Activated CD4-positive, alpha-beta T cell treated with anti-CD3 and anti-CD28 coated beads for 36 hours (primary cell): ENCODE measurements at regions of chr11 and their contacts with region 1.

Region 1: DNA sequence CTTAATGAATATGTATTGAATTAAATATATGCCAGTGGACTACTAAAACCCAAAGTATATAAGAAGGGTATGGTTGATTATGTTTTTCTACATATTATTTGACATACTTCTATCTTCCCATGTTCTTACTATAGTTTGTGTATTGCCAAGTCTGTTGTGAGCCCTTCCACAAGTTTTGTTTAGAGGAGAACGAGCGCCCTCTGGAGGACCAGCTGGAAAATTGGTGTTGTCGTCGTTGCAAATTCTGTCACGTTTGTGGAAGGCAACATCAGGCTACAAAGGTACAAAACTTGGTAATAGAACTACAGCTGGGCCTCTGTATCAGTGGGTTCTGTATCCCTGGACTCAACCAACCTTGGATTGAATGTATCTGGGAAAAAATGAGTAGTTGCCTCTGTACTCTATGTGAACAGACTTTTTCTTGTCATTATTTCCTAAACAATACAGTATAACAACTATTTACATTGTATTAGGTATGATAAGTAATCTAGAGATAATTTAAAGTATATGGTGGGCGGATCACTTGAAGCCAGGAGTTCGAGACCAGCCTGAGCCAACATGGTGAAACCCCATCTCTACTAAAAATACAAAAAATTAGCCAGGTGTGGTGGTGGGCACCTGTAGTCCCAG is 38.7 kb upstream of the TTC36 start:
- DNase-seq: peak; percentile 90
- ATAC-seq: peak; percentile 71
- H3K4me3 Mint-ChIP-seq: no peak overlapping the region
- H3K27ac Mint-ChIP-seq: peak overlapping the region; percentile 10
- H3K4me1 Mint-ChIP-seq: peaks cover 5% of the 10 kb centered on the region
- H3K27me3 Mint-ChIP-seq: no peaks in the 10 kb centered on the region

Region 2: GRCh38 chr11:118448294-118448693 is 40.3 kb before region 1 on chr11:
- CTCF ChIA-PET with region 1: interaction called, 15 read pairs
- POLR2A ChIA-PET with region 1: no interaction called
- intact Hi-C with region 1: no loop called
- DNase-seq: peak; percentile 10
- ATAC-seq: peak; percentile 64
- H3K4me3 Mint-ChIP-seq: no peak overlapping the region
- H3K27ac Mint-ChIP-seq: no peak overlapping the region
- H3K4me1 Mint-ChIP-seq: peaks cover 73% of the 10 kb centered on the region
- H3K27me3 Mint-ChIP-seq: no peaks in the 10 kb centered on the region

Region 3: GRCh38 chr11:119572481-119573424 is 1084.2 kb after region 1 on chr11:
- CTCF ChIA-PET with region 1: no interaction called
- POLR2A ChIA-PET with region 1: no interaction called
- intact Hi-C with region 1: no loop called
- DNase-seq: no peak
- ATAC-seq: no peak
- H3K4me3 Mint-ChIP-seq: no peak overlapping the region
- H3K27ac Mint-ChIP-seq: no peak overlapping the region
- H3K4me1 Mint-ChIP-seq: no peaks in the 10 kb centered on the region
- H3K27me3 Mint-ChIP-seq: peaks cover 9% of the 10 kb centered on the region